Activated T-helper 2 cell treated with anti-CD3 and anti-CD28 coated beads, Interferon-gamma antibody, Interleukin-2, Interleukin-4, amounts not matched to agents 10 μg/mL and 5 μg/mL and 100 μg/mL, durations not matched to agents 14 hours and 24 hours and 36 hours (primary cell): ENCODE measurements at regions of chr9 and their contacts with region 1.

Region 1: DNA sequence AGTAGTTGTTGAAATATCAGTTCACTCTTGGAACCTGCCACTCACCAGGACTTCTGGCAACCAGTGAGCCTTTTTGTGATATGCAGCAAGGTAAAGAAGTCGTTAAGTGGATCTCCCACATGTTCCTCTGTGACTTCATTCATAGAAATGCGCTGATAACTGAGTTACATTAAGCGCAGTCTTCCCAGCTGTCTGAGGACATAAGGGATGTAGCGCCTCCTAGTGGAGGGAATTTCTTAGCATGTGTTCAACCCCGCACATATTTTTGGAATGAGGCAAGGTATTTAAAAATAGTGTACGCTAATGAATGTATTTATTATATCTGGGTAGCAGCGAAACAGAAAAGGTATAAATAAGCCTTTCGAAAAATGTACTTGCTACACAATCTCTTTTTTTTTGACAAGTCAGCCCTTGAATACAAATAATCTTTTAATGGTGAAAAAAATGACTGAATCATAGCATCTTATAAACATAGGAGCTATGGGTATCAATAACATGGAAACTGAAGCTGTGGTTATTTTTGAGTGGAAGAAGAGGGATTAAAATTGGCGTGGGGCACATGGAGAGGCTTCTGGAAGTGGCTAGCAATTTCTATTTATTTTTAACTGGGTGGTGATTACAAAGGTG is 38.0 kb downstream of the PALM2AKAP2 start:
- DNase-seq: peak; percentile 20
- H3K4me3 Mint-ChIP-seq: no peak overlapping the region
- H3K27ac Mint-ChIP-seq: no peak overlapping the region
- H3K4me1 Mint-ChIP-seq: no peaks in the 10 kb centered on the region
- H3K27me3 Mint-ChIP-seq: peaks cover 3% of the 10 kb centered on the region

Region 2: GRCh38 chr9:109574068-109574882 is 243.7 kb before region 1 on chr9:
- intact Hi-C with region 1: loop called (anchors 1 kb)
- DNase-seq: no peak
- H3K4me3 Mint-ChIP-seq: no peak overlapping the region
- H3K27ac Mint-ChIP-seq: no peak overlapping the region
- H3K4me1 Mint-ChIP-seq: no peaks in the 10 kb centered on the region
- H3K27me3 Mint-ChIP-seq: peaks cover 25% of the 10 kb centered on the region

Region 3: DNA sequence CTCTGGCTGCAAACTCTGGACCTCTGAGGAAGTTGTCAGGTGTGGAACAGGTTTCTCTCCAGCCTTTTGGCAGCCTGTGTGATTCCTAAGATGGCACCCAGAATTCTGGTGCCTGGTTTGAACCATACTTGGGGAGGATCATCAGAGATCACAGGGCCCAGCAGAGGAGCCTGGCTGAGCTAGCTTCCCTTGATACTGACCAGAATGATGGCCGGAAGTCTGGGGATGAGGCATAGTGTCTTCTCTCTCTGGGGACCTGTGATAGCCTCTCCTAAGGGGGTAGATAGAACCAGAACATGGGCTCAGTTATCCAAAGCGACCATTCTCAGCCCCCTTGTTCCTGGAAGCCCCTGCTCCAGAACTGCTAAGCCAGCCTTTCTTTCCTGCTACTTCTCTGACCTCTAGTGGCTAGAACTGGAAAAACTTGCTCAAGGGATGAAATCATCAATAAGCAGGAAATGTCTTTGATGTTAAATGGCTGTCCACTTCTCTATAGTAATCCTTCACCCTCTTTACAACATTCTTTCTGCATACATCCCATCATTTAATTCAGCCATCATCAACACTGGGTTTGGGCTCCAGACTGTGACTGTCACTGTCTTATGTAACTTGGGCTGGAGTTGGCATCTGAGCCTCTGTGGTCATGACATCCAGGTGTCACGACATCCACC is 334.9 kb after region 1 on chr9:
- intact Hi-C with region 1: loop called (anchors 1 kb)
- DNase-seq: no peak
- H3K4me3 Mint-ChIP-seq: peak overlapping the region; percentile 37
- H3K27ac Mint-ChIP-seq: peak overlapping the region; percentile 77
- H3K4me1 Mint-ChIP-seq: peaks cover 95% of the 10 kb centered on the region
- H3K27me3 Mint-ChIP-seq: no peaks in the 10 kb centered on the region